ENCODE measurements at regions of chr3 and their contacts with region 1.

Region 1: GRCh38 chr3:112582244-112582874 is 20.5 kb downstream of the SLC35A5 start:
- DNase-seq: peak; percentile 37
- H3K4me3 ChIP-seq: no peak overlapping the region
- CTCF ChIP-seq: peak; percentile 53

Region 2: GRCh38 chr3:111794711-111795110 is 787.6 kb before region 1 on chr3:
- CTCF ChIA-PET with region 1: no interaction called
- POLR2A ChIA-PET with region 1: no interaction called
- DNase-seq: no peak
- H3K4me3 ChIP-seq: no peak overlapping the region
- CTCF ChIP-seq: no peak

Region 3: GRCh38 chr3:112473212-112473640 is 109.1 kb before region 1 on chr3:
- CTCF ChIA-PET with region 1: no interaction called
- POLR2A ChIA-PET with region 1: no interaction called
- DNase-seq: no peak
- H3K4me3 ChIP-seq: no peak overlapping the region
- CTCF ChIP-seq: no peak

Region 4: GRCh38 chr3:112561731-112562688 is 20.3 kb before region 1 on chr3 and contains the starts of genes ATG3 and SLC35A5:
- CTCF ChIA-PET with region 1: interaction called, 10 read pairs
- POLR2A ChIA-PET with region 1: no interaction called
- DNase-seq: peak; percentile 94
- H3K4me3 ChIP-seq: peak within 1 kb of the TSS; percentile 91
- CTCF ChIP-seq: peak; percentile 6

Region 5: GRCh38 chr3:112602217-112602838 is 20.0 kb after region 1 on chr3:
- CTCF ChIA-PET with region 1: interaction called, 36 read pairs
- POLR2A ChIA-PET with region 1: no interaction called
- DNase-seq: no peak
- H3K4me3 ChIP-seq: no peak overlapping the region
- CTCF ChIP-seq: no peak

Region 6: GRCh38 chr3:112623717-112624116 is 41.4 kb after region 1 on chr3:
- CTCF ChIA-PET with region 1: interaction called, 16 read pairs
- POLR2A ChIA-PET with region 1: no interaction called
- DNase-seq: no peak
- H3K4me3 ChIP-seq: no peak overlapping the region
- CTCF ChIP-seq: no peak

Region 7: DNA sequence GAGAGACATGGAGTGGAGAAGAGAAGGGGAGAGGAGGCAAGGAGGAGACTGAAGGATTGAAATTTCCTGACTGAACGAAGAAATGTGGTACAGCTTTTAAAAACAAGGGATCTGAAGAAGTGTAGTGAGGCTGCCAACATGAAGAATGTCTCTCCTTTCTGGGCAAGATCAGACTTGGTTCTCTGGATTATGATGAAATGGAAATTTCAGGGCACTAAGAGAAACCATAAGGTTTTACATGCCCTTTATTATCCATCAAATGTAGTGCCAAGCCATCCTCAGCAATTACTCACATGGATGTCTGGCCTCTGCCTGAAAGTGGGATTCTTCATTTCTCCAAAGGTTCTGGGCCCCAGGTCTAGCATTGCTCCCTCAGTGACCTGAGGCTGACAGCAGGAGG is 136.2 kb after region 1 on chr3:
- CTCF ChIA-PET with region 1: no interaction called
- POLR2A ChIA-PET with region 1: no interaction called
- DNase-seq: no peak
- H3K4me3 ChIP-seq: no peak overlapping the region
- CTCF ChIP-seq: no peak

Region 8: GRCh38 chr3:112979240-112979832 is 397.0 kb after region 1 on chr3:
- CTCF ChIA-PET with region 1: interaction called, 24 read pairs
- POLR2A ChIA-PET with region 1: no interaction called
- DNase-seq: peak; percentile 5
- H3K4me3 ChIP-seq: no peak overlapping the region
- CTCF ChIP-seq: peak; percentile 30